Right lobe of liver (tissue), 6 donors: ENCODE measurements at regions of chr15 and their contacts with region 1.

Region 1: GRCh38 chr15:80474224-80475215 is 70.3 kb downstream of the ARNT2 start:
- DNase-seq: no peak
- ATAC-seq: no peak
- H3K4me3 ChIP-seq: no peak overlapping the region
- H3K27ac ChIP-seq: no peak overlapping the region
- H3K4me1 ChIP-seq: no peaks in the 10 kb centered on the region
- H3K27me3 ChIP-seq: no peaks in the 10 kb centered on the region
- CTCF ChIP-seq: no peak
- POLR2A ChIP-seq: no peak

Region 2: DNA sequence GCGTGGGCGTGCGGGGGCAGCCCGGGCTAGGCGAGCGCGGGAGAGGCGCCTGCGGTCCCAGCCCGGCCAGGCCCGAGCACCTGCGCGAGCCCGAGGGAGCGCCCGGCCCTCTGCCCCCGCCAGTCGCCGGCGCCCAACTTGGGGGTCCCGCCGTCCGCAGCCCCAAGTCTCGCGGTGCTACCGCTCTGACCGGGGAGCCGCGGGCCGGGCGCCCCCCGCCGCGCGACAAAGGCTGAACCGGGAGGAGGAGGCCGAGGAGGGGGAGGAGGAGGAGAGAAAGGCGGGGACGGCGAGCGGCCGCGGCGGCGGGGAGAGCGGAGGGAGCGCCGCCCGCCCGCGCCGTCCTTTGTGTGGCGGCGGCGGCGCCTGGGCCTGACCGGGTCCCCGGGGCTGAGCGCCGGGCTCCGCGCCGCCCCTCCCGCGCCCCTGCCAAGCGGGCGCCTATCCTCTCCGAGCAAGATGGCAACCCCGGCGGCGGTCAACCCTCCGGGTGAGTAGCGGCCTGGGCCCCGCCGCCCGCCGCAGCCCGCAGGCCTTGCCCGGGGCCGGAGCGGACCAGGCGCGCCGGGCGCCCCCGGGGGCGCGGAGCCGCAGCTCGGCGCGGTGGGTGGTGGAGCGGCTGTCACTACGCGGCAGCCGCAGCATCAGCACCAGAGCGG is 70.3 kb before region 1 on chr15 and contains the start of gene ARNT2:
- intact Hi-C with region 1: no loop called
- DNase-seq: peak in 1 of 3 donors; percentile 22
- ATAC-seq: peak; percentile 37 to 52 (median 40)
- H3K4me3 ChIP-seq: peak within 1 kb of the TSS in 2 of 3 donors; percentile 12 to 46
- H3K27ac ChIP-seq: no peak within 1 kb of the TSS
- H3K4me1 ChIP-seq: no peaks in the 10 kb centered on the region
- H3K27me3 ChIP-seq: peaks cover 0 to 9% of the 10 kb centered on the region in 2 donors
- CTCF ChIP-seq: no peak
- POLR2A ChIP-seq: no peak
- total RNA-seq, gene ARNT2: 0.12 to 1.3 (median 0.46) TPM

Region 3: DNA sequence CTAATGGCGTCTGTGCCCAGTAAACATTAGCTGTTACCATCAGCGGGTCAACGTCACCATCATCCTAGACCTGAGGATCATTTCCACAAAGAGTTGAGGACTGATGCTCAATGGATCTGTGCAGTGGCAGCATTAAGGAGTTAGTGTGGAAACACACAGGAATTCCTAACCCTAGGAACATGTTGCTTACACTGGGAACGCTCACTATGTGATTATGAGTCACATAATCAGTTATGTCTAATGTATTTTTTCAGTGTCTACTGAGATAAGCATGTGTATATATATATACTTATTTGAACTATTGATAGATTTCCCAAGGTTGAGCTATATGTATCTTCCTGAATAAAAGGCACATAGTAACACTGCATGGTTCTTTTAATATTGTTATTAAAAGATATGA is 51.3 kb before region 1 on chr15:
- intact Hi-C with region 1: loop called in 1 of 2 experiments (anchors 5 kb)
- DNase-seq: no peak
- ATAC-seq: no peak
- H3K4me3 ChIP-seq: no peak overlapping the region
- H3K27ac ChIP-seq: no peak overlapping the region
- H3K4me1 ChIP-seq: peaks cover 0 to 10% (median 0%) of the 10 kb centered on the region in 4 donors
- H3K27me3 ChIP-seq: no peaks in the 10 kb centered on the region
- CTCF ChIP-seq: no peak
- POLR2A ChIP-seq: no peak

Region 4: DNA sequence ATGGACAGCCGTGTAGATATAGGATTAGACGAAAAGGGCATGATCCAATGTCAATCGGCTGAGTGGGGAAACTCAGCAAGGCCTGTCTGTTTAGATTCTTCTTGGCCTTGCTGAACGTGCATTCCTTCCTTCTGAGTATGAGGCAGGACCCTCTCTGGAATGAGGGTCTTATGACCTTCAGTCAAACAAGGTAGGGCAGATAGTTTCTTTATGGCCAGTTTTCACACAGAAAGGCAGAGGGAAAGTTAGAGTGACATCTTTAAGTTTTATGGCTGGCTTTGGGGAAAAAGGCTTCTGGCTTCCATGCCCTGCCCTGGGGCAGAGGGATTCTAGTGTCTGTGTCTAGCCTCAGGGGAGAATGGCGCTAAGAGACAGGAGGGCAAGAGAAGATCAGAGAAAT is 40.7 kb before region 1 on chr15:
- intact Hi-C with region 1: no loop called
- DNase-seq: no peak
- ATAC-seq: no peak
- H3K4me3 ChIP-seq: no peak overlapping the region
- H3K27ac ChIP-seq: no peak overlapping the region
- H3K4me1 ChIP-seq: no peaks in the 10 kb centered on the region
- H3K27me3 ChIP-seq: no peaks in the 10 kb centered on the region
- CTCF ChIP-seq: no peak
- POLR2A ChIP-seq: no peak